WTC11 (cell line): ENCODE measurements at regions of chr3 and their contacts with region 1.

Region 1: GRCh38 chr3:47324278-47324865 is 41.6 kb downstream of the KLHL18 start:
- DNase-seq: peak; percentile 68
- ATAC-seq: peak; percentile 93
- H3K4me3 Mint-ChIP-seq: no peak overlapping the region
- H3K27ac Mint-ChIP-seq: no peak overlapping the region
- H3K4me1 Mint-ChIP-seq: no peaks in the 10 kb centered on the region
- H3K27me3 Mint-ChIP-seq: no peaks in the 10 kb centered on the region
- CTCF ChIP-seq: peak; percentile 57

Region 2: DNA sequence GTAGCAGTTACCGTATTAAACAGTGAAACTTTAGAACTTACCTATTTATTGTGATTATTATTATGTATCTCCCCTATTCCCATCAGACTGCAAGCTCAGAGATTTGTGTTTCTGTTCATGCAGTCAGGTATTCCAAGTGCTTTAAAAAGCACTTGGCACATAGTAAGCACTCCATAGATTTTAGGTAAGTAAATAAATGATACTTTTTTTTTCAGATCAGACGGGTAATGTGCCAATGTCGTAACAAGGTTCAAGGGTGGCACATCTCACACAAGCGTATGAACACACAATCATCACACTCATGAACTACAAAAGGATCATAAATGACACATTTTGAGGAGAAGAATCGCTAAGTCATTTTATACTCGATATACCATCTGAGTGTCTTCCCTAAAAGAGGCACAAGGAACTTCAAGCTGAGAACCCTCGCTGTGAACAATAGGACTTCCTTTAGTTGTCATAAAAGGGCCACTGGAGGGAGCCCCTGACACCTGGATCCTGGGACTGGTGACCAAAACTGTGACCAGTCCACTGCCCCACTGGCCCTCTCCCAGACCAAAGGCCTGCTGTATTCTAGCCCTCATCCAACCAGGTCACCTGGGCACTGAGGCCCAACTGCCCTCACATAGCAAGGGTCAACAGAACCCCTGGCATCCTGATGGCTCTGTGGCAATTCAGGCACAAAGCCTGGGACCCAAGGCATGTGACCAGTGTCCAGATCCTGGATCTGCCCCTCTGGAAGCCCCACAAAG is 73.9 kb before region 1 on chr3:
- CTCF ChIA-PET with region 1: interaction called, 11 read pairs
- POLR2A ChIA-PET with region 1: no interaction called
- DNase-seq: peak; percentile 44
- ATAC-seq: peak; percentile 78
- H3K4me3 Mint-ChIP-seq: no peak overlapping the region
- H3K27ac Mint-ChIP-seq: no peak overlapping the region
- H3K4me1 Mint-ChIP-seq: peaks cover 4% of the 10 kb centered on the region
- H3K27me3 Mint-ChIP-seq: no peaks in the 10 kb centered on the region
- CTCF ChIP-seq: no peak